Naive thymus-derived CD8-positive, alpha-beta T cell (primary cell): ENCODE measurements at regions of chr15 and their contacts with region 1.

Region 1: DNA sequence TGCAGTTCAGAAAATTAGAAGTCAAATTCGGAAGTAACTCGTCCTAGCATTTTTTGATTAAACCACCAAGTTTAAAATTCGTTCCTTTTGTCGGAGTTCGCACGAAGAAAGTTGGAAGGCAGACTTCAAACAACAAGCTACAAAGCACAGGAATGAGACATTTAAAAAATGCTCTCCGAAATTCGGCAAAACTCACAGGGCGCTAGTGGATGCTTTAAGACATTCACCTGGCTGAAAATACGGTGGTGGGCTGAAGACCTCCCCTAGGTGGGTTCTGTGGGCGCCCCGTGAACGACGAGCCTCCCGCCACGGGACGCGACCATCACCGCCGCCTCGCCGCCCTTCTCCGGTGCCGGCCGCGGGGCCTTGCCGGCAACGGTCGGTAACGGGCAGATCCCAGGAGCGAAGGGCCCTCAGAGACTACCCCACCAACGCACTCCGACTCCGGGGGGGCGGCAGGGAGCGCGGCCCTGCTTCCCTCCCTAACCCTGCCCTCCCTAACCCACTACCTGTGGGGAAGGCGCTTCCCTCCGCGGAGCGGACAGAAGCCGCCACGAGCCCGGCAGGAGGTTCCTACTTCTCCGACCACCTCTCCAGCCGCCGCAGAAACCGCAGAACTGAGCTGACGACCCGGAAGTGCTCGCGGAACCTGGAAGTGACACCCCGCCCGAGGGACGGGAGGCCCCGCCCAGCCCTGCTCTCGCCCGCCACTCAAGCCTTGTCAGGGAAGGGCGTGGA is at the start of gene GTF2A2:
- DNase-seq: peak; percentile 87 to 95 (median 90)
- ATAC-seq: peak; percentile 97 to 98
- H3K4me3 Mint-ChIP-seq: peak within 1 kb of the TSS in 4 of 10 donors; percentile 22 to 63 (median 34)
- H3K27ac Mint-ChIP-seq: peak within 1 kb of the TSS in 2 of 10 donors; percentile 78 to 92
- H3K4me1 Mint-ChIP-seq: peaks cover 8 to 14% (median 11%) of the 10 kb centered on the region in 4 donors
- H3K27me3 Mint-ChIP-seq: no peaks in the 10 kb centered on the region
- polyA plus RNA-seq, gene GTF2A2: 97.2 to 136 (median 105) TPM

Region 2: GRCh38 chr15:59594493-59594942 is 62.5 kb before region 1 on chr15:
- POLR2A ChIA-PET with region 1: no interaction called
- DNase-seq: no peak
- ATAC-seq: no peak
- H3K4me3 Mint-ChIP-seq: no peak overlapping the region
- H3K27ac Mint-ChIP-seq: no peak overlapping the region
- H3K4me1 Mint-ChIP-seq: peaks cover 3 to 12% (median 9%) of the 10 kb centered on the region in 4 donors
- H3K27me3 Mint-ChIP-seq: peaks cover 1 to 12% (median 3%) of the 10 kb centered on the region in 5 donors

Region 3: DNA sequence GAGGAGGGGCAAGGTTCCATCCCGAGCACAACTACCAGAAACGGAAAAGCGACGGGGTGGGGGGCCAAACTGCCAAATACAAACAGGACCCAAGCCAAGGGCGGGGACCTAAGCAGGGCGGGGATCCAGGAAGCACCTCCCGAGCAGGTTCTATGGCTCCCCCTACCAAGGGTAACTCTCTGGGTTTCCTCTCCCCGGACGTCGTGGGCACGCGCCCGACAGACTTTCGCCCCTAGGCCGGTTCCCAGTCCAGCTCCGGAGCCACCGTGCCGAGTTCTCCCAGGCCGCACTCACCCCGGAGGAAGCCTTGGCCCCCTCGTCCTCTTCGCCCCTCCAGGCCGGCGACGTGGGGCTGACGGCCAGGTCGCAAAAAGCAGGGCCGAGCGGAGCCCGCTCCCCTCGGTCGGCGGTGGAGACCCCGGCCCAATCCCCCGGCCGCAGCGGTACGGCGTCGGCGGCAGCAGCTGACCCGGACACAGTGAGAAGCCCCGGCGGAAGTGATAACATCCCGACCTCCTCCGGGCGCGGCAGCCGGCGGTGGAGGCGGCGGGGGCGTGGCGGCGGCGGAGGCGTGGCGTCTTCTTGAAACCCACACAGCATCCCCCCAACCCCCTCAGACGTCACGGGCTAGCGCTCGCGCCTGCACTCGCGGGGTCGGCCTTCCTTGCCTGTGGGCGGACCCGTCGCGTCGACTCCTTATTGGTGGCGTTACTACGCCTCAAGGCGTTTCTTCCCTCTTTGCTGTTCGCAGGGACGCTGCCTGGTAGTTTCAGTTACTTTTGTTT is 32.0 kb after region 1 on chr15 and contains the start of gene BNIP2:
- POLR2A ChIA-PET with region 1: interaction called, 26 read pairs
- DNase-seq: peak; percentile 97 to 100 (median 99)
- ATAC-seq: peak; percentile 91
- H3K4me3 Mint-ChIP-seq: peak within 1 kb of the TSS; percentile 81 to 98 (median 96)
- H3K27ac Mint-ChIP-seq: peak within 1 kb of the TSS; percentile 86 to 100 (median 98)
- H3K4me1 Mint-ChIP-seq: peaks cover 13 to 56% (median 41%) of the 10 kb centered on the region in 4 donors
- H3K27me3 Mint-ChIP-seq: no peaks in the 10 kb centered on the region
- polyA plus RNA-seq, gene BNIP2: 92.2 to 93.4 (median 92.2) TPM

Region 4: GRCh38 chr15:59711451-59712243 is 54.6 kb after region 1 on chr15:
- POLR2A ChIA-PET with region 1: no interaction called
- DNase-seq: no peak
- ATAC-seq: no peak
- H3K4me3 Mint-ChIP-seq: no peak overlapping the region
- H3K27ac Mint-ChIP-seq: no peak overlapping the region
- H3K4me1 Mint-ChIP-seq: no peaks in the 10 kb centered on the region
- H3K27me3 Mint-ChIP-seq: peaks cover 0 to 4% (median 2%) of the 10 kb centered on the region in 5 donors